CD8-positive, alpha-beta T cell (primary cell): ENCODE measurements at regions of chr7 and their contacts with region 1.

Region 1: GRCh38 chr7:7761340-7761980 is 43.1 kb upstream of the RPA3 start:
- DNase-seq: peak in 2 of 9 experiments; percentile 61 to 68
- ATAC-seq: peak; percentile 24
- H3K4me3 ChIP-seq: peak overlapping the region; percentile 49 to 52
- H3K4me3 Mint-ChIP-seq: peak overlapping the region; percentile 93
- H3K27ac ChIP-seq: peak overlapping the region; percentile 52 to 80
- H3K27ac Mint-ChIP-seq: peak overlapping the region; percentile 98
- H3K4me1 ChIP-seq: peaks cover 29% of the 10 kb centered on the region
- H3K4me1 Mint-ChIP-seq: peaks cover 46% of the 10 kb centered on the region
- H3K27me3 ChIP-seq: no peaks in the 10 kb centered on the region
- H3K27me3 Mint-ChIP-seq: no peaks in the 10 kb centered on the region
- CTCF ChIP-seq: peak; percentile 46

Region 2: GRCh38 chr7:7595451-7595850 is 166.0 kb before region 1 on chr7:
- CTCF ChIA-PET with region 1: interaction called, 3 read pairs
- POLR2A ChIA-PET with region 1: no interaction called
- intact Hi-C with region 1: loop called (anchors 2 to 5 kb)
- DNase-seq: peak in 2 of 9 experiments; percentile 39 to 57
- ATAC-seq: peak; percentile 52
- H3K4me3 ChIP-seq: no peak overlapping the region
- H3K4me3 Mint-ChIP-seq: no peak overlapping the region
- H3K27ac ChIP-seq: no peak overlapping the region
- H3K27ac Mint-ChIP-seq: no peak overlapping the region
- H3K4me1 ChIP-seq: no peaks in the 10 kb centered on the region
- H3K4me1 Mint-ChIP-seq: peaks cover 2% of the 10 kb centered on the region
- H3K27me3 ChIP-seq: no peaks in the 10 kb centered on the region
- H3K27me3 Mint-ChIP-seq: no peaks in the 10 kb centered on the region
- CTCF ChIP-seq: peak; percentile 69

Region 3: GRCh38 chr7:7772397-7772821 is 10.9 kb after region 1 on chr7:
- CTCF ChIA-PET with region 1: interaction called, 6 read pairs
- POLR2A ChIA-PET with region 1: interaction called, 3 read pairs
- intact Hi-C with region 1: loop called in 1 of 2 experiments (anchors 1 kb)
- DNase-seq: peak in 1 of 9 experiments; percentile 9
- ATAC-seq: peak; percentile 34
- H3K4me3 ChIP-seq: no peak overlapping the region
- H3K4me3 Mint-ChIP-seq: peak overlapping the region; percentile 69
- H3K27ac ChIP-seq: no peak overlapping the region
- H3K27ac Mint-ChIP-seq: peak overlapping the region; percentile 80
- H3K4me1 ChIP-seq: peaks cover 12% of the 10 kb centered on the region
- H3K4me1 Mint-ChIP-seq: peaks cover 31% of the 10 kb centered on the region
- H3K27me3 ChIP-seq: no peaks in the 10 kb centered on the region
- H3K27me3 Mint-ChIP-seq: no peaks in the 10 kb centered on the region
- CTCF ChIP-seq: no peak

Region 4: DNA sequence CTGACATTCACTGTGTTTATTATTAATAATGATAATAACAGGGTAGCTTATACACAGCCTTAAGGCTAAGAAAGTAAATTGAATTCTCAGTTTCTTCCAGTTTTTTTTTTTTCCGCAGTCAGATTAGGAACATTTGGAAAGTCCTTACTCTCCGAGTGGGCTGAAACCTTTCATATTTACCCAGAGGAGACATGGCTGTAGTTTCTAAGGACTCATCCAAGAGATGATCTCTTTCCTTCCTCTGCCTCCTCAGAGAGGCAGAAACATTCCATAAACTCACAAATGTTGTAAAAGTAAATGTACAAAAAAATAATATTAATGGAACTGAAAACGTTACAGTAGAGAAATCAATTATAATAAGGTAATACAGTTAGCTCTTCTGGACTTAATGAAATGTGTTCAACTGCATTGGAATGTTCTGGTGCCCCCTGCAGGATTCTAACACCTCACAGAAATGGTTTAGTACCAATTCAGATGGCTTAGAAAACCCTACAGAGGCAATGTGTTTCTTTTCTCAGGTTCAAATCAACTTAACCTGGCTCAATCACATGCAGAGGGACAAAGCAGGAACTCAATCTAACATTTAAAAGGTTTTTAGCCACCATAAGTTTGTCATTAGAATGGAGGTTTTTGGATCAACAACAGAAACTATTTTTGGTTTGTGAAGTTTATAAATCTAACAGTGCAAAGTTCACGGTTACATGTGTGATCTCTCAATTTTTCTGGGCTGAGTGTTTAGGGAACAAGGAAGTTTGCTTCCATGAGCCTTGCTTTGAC is 428.8 kb after region 1 on chr7:
- CTCF ChIA-PET with region 1: interaction called, 13 read pairs
- POLR2A ChIA-PET with region 1: no interaction called
- intact Hi-C with region 1: loop called (anchors 2 to 5 kb)
- DNase-seq: peak; percentile 32 to 84 (median 70)
- ATAC-seq: peak; percentile 86
- H3K4me3 ChIP-seq: no peak overlapping the region
- H3K4me3 Mint-ChIP-seq: no peak overlapping the region
- H3K27ac ChIP-seq: no peak overlapping the region
- H3K27ac Mint-ChIP-seq: no peak overlapping the region
- H3K4me1 ChIP-seq: no peaks in the 10 kb centered on the region
- H3K4me1 Mint-ChIP-seq: peaks cover 16% of the 10 kb centered on the region
- H3K27me3 ChIP-seq: no peaks in the 10 kb centered on the region
- H3K27me3 Mint-ChIP-seq: peaks cover 5% of the 10 kb centered on the region
- CTCF ChIP-seq: peak; percentile 89